Pancreas (tissue), 10 donors: ENCODE measurements at regions of chr7 and their contacts with region 1.

Region 1: DNA sequence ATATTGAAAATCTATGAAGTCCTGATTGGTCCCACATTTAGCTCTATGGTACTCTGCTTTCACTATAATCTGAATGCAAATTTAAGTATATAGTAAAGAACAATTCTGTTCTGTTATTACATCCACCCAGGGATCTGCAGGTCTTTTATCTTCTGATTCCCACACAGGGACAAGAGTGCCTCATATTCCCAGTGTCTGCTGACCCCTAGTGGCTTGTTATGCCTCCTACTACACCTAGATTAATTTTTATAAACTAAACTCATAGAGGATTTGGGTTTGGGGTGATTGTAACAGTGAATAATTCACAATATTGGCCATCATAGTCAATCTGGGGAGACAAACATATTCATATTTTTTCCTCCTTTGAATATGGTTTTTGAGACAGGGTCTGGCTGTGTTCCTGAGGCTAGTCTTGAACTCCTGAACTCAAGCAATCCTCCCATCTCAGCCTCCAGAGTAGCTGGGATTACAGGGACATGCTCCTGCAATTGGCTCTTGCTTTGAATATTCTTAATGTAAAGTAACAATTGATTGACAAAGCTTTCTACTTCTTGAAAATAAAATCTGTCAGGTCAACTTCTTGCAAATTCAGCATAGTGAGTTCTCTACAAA is 282.1 kb downstream of the KCND2 start:
- DNase-seq: peak in 3 of 6 donors; percentile 5 to 40 (median 26)
- ATAC-seq: peak in 3 of 4 donors; percentile 76 to 86 (median 80)
- H3K4me3 ChIP-seq: no peak overlapping the region
- H3K27ac ChIP-seq: no peak overlapping the region
- H3K4me1 ChIP-seq: no peaks in the 10 kb centered on the region
- H3K27me3 ChIP-seq: peaks cover 0 to under 1% (median 0%) of the 10 kb centered on the region in 4 donors
- CTCF ChIP-seq: peak; percentile 16 to 65 (median 55)

Region 2: DNA sequence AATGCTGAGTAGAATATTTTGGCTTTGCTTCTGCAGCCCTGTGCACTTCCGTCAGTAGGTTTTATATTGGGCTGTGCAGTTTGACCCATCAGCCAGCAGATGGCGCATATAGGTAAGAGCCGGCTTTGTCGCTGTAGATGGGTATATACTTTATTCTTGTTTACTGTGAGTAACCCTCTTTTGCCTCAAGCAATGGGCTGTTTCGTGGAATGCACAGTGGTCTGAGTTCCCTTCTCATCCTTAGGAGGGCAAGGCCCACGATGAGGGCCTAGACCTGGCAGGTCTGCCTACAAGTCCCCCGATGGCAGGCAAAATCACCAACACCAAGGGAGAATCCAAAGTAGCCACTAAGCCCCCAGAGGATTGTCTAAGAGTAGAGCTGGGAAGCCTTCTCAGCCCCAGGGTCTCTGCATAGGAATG is 1285.0 kb before region 1 on chr7:
- intact Hi-C with region 1: loop called in 1 of 3 experiments (anchors 10 kb)
- DNase-seq: peak; percentile 25 to 61 (median 34)
- ATAC-seq: peak; percentile 86 to 95 (median 93)
- H3K4me3 ChIP-seq: no peak overlapping the region
- H3K27ac ChIP-seq: no peak overlapping the region
- H3K4me1 ChIP-seq: no peaks in the 10 kb centered on the region
- H3K27me3 ChIP-seq: peaks cover 0 to 5% (median 0%) of the 10 kb centered on the region in 4 donors
- CTCF ChIP-seq: peak; percentile 60 to 87 (median 78)

Region 3: DNA sequence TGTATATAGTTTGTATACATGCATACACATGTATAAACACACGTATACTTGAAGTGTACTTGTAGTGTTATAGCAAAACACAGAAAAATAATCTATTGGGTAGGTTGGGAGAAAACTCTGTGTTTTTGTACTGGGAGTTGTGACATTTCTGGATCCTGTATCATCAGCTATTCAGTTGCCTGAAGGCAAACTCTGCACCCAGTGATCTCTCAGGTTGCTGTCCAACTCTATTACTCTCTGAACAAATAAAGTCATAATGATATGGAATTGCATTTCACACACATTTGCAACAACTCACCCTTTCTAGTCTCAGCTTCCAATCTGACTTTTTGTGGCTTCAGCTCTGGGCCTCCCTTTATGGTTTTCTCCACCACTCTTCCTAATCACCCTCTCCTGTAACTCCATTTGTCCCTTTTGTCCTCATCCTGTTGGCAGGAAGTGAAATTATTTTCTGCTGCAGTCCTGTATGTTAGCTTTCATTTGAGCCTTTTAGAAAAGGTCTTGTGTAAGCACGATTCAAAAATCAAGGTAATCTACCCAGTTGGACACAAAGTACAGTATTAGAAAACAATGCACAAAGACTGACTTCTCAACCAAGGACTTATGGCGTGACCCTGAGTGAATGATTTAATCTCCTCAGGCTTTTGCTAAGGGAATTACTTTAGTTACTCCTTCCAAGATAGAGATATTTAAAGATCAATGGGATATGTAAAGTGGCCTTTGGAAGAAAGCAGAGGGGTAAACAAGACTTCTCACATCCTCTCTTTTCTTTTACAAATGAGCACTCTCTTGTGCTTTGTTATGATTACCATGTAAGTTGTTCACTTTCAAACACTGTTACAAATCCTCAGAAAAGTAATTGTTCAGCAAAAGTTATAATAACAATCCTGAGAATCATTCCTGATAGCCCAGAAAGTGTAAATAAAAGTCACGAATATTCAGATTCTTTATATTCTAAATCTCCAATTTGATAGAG is 33.0 kb before region 1 on chr7:
- intact Hi-C with region 1: no loop called
- DNase-seq: no peak
- ATAC-seq: no peak
- H3K4me3 ChIP-seq: no peak overlapping the region
- H3K27ac ChIP-seq: no peak overlapping the region
- H3K4me1 ChIP-seq: no peaks in the 10 kb centered on the region
- H3K27me3 ChIP-seq: no peaks in the 10 kb centered on the region
- CTCF ChIP-seq: no peak